Colonic mucosa (tissue), 4 donors: ENCODE measurements at regions of chr5 and their contacts with region 1.

Region 1: GRCh38 chr5:88729084-88729828 is 153.7 kb downstream of the MEF2C start:
- DNase-seq: peak; percentile 68
- H3K4me3 ChIP-seq: no peak overlapping the region
- H3K27ac ChIP-seq: no peak overlapping the region
- H3K4me1 ChIP-seq: no peaks in the 10 kb centered on the region
- H3K27me3 ChIP-seq: no peaks in the 10 kb centered on the region
- CTCF ChIP-seq: peak; percentile 84

Region 2: DNA sequence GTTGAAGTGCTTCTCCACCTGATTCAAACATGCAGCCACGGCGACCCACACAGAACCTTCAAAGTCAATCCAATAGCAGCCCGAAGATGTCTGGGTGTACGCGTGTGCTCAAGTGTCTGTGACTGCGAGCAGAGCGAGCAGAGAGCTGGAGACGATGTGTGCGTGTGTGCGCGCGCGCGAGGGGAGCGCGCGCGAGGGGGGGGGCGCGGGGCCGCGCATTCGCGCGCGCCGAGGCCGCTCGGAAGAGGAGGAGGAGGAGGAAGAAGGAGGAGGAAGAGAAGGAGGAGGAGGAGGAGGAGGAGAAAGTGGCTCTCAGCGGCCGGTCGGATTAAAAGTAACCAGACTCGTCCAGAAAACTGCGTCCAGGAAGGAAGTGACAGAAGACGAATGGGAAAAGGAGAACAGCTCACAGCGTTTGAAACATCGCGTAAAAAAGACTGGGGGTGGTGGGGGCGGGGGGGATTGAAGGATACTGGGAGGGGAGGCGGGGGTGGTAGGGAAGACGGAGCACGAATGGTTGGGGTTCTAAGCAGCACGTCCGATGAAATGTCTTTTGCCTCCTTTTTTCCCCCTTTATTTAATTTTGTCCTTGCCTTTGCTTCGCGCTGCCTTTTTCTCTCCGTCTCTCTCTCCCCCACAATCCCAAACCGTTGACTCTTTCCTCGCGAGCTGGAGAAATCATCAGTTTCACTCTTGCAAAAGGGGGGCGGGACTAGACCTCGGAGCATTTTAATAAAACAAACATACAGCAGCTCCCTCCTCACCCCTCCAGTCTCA is 154.0 kb after region 1 on chr5 and contains the start of gene MEF2C:
- intact Hi-C with region 1: loop called (anchors 10 kb)
- DNase-seq: peak; percentile 74
- H3K4me3 ChIP-seq: peak within 1 kb of the TSS; percentile 52
- H3K27ac ChIP-seq: peak within 1 kb of the TSS; percentile 80
- H3K4me1 ChIP-seq: no peaks in the 10 kb centered on the region
- H3K27me3 ChIP-seq: no peaks in the 10 kb centered on the region
- CTCF ChIP-seq: no peak
- total RNA-seq, gene MEF2C: 7.3 to 26.9 TPM

Region 3: DNA sequence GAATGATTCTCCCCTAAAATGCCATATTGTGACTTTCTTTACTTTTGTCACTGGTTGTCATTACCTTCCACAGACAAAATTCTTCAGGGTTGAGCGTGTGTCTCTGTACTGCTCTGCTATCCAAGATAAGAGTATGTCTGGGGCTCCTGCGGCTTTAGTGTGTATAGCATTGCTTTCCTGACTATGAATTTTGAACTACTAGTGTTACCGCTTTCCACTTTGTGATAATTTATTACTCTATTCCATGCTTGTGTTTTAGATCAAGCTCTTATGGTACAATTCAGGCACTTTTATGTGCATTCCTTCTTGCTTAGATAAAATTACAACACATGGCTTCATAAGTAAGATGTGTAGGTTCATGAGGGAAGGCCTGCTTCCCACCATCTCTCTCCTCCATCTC is 205.2 kb after region 1 on chr5:
- intact Hi-C with region 1: no loop called
- DNase-seq: no peak
- H3K4me3 ChIP-seq: no peak overlapping the region
- H3K27ac ChIP-seq: no peak overlapping the region
- H3K4me1 ChIP-seq: peaks cover 3% of the 10 kb centered on the region
- H3K27me3 ChIP-seq: no peaks in the 10 kb centered on the region
- CTCF ChIP-seq: no peak

Region 4: GRCh38 chr5:89729623-89730301 is 1000.5 kb after region 1 on chr5:
- intact Hi-C with region 1: loop called (anchors 5 kb)
- DNase-seq: no peak
- H3K4me3 ChIP-seq: no peak overlapping the region
- H3K27ac ChIP-seq: no peak overlapping the region
- H3K4me1 ChIP-seq: no peaks in the 10 kb centered on the region
- H3K27me3 ChIP-seq: no peaks in the 10 kb centered on the region
- CTCF ChIP-seq: peak; percentile 16

Region 5: GRCh38 chr5:90264689-90265544 is 1535.7 kb after region 1 on chr5:
- intact Hi-C with region 1: loop called (anchors 5 kb)
- DNase-seq: peak; percentile 60
- H3K4me3 ChIP-seq: no peak overlapping the region
- H3K27ac ChIP-seq: no peak overlapping the region
- H3K4me1 ChIP-seq: no peaks in the 10 kb centered on the region
- H3K27me3 ChIP-seq: no peaks in the 10 kb centered on the region
- CTCF ChIP-seq: peak; percentile 84